ENCODE measurements at regions of chr9 and their contacts with region 1.

Region 1: DNA sequence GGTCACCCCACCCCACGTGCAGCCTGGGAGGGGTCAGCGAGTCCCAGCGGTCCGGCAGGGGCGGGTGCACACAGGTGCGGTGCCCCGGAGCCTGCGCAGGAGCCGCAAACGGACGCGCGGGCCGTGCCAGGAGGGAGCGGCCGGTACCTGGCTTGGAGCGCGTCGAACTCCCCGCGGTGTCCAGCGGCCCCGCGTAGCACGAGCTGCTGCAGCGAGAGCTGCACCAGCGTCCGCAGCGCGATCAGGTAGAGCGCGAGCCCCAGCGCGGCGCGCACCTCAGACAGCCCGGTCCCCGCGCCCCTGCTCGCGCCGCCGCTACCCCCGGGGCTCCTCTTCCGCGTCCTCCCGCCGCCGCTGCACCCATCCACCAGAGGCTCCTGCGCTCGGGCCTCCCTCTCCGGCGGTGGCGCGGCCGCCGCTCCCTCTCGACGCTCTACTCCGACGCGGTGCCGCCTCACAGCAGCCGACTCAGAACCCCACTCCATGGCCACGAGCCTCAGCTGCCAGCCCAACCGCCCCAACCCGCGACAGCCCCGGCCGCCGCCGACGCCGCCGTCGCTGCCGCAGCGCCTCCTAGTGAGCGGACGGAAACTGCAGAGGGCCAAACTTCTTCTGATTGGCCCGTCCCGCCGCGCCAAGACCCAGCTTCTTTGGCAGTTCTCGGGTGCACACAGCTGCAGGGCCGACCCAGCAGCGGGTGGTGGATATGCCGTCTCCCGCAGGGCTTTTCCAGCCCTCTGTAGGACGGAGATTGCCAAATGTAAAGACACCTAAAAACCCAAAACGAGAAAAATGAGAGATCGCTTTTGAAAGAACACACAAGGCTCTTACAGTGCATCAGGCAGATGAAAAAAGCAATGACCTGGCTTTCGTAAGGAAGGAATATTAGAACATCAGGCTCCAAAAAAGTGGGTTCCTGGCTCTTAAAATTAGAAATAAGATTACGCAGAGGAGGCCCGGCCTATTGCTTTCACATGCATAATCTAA is at the start of gene ERMP1:
- DNase-seq: peak; percentile 61 to 86
- H3K4me3 ChIP-seq: peak within 1 kb of the TSS; percentile 83 to 97 (median 86)
- H3K27ac ChIP-seq: peak within 1 kb of the TSS; percentile 67 to 85
- H3K4me1 ChIP-seq: peaks cover 0 to 8% of the 10 kb centered on the region in 2 donors
- H3K27me3 ChIP-seq: no peaks in the 10 kb centered on the region
- CTCF ChIP-seq: peak; percentile 75 to 85 (median 79)
- POLR2A ChIP-seq: peak; percentile 21
- total RNA-seq, gene ERMP1: 12.6 to 39.2 (median 34.1) TPM

Region 2: DNA sequence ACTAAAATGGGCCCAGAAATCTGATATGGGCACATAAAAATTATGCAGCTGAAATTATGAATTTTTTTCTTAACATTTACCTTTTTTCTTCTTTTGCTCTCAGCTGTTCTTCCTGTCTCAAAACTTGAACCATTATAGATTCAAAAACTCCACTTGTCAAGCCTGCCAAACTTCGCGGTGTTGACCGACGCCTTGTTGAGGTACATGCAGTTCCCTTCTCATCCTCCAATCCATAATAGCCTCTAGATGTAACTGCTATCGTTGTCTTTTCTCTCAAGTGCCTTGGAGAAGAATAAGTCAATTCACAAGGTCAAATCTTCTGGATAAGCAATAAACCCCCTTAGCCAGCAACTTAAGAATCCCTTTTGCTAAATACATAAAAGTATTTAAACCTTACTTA is 155.4 kb after region 1 on chr9:
- intact Hi-C with region 1: loop called (anchors 10 kb)
- DNase-seq: no peak
- H3K4me3 ChIP-seq: no peak overlapping the region
- H3K27ac ChIP-seq: no peak overlapping the region
- H3K4me1 ChIP-seq: no peaks in the 10 kb centered on the region
- H3K27me3 ChIP-seq: no peaks in the 10 kb centered on the region
- CTCF ChIP-seq: no peak
- POLR2A ChIP-seq: no peak

Measured in breast epithelium (tissue), 4 donors.